Common myeloid progenitor, CD34-positive (primary cell): ENCODE measurements at regions of chr20 and their contacts with region 1.

Region 1: DNA sequence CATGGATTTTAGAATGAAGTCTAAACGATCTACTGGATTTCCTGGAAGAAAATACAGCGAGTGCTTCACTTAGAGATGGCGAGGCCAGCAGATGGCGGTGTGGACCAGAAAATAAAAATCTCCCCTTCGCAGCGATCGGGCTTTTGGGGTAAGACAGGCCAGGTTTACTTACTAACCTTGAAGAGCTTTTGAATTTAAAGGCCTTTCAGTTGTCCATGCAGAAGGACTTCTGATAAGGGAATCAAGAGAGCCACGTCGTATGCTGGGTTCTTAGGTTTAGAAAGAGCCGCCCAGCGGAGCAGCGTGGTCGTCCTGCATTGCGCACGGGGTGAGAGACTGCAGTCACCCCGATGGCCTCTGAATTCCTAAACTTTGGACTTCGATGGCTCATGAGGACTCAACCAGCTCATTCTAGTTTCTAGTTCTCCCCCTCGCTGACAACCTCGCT is 125.2 kb upstream of the RALGAPA2 start:
- DNase-seq: peak; percentile 67 to 81 (median 77)
- H3K4me3 ChIP-seq: peak overlapping the region in 1 of 7 experiments; percentile 36
- H3K27ac ChIP-seq: no peak overlapping the region
- H3K4me1 ChIP-seq: peaks cover 0 to 2% (median 1%) of the 10 kb centered on the region in 4 experiments
- H3K27me3 ChIP-seq: peaks cover 0 to 41% (median 9%) of the 10 kb centered on the region in 5 experiments

Region 2: DNA sequence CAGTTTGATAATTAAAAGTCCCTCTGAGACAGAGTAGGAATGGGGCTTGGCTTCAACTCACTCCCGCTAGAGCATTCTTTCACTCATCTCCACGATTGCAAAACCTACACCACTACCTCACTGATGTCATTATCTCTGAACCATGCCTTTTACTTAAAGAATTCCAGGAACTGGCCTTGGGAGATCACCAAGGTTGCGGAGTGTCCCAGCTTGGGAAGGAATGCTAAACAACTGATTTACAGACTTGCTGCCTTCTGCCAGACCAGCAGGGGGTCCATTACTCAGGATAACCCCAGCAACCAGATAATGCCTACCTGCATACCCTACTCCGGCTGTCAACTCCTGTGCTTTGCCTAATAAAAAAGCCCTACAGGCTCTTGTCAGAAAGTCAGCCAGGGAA is 22.9 kb before region 1 on chr20:
- CTCF ChIA-PET with region 1: no interaction called
- POLR2A ChIA-PET with region 1: no interaction called
- DNase-seq: no peak
- H3K4me3 ChIP-seq: no peak overlapping the region
- H3K27ac ChIP-seq: no peak overlapping the region
- H3K4me1 ChIP-seq: peaks cover 0 to 4% (median 0%) of the 10 kb centered on the region in 4 experiments
- H3K27me3 ChIP-seq: no peaks in the 10 kb centered on the region

Region 3: GRCh38 chr20:20849161-20849560 is 11.6 kb after region 1 on chr20:
- CTCF ChIA-PET with region 1: interaction called, 18 read pairs
- POLR2A ChIA-PET with region 1: no interaction called
- DNase-seq: no peak
- H3K4me3 ChIP-seq: no peak overlapping the region
- H3K27ac ChIP-seq: no peak overlapping the region
- H3K4me1 ChIP-seq: peaks cover 0 to 3% (median 1%) of the 10 kb centered on the region in 4 experiments
- H3K27me3 ChIP-seq: peaks cover 0 to 4% (median 0%) of the 10 kb centered on the region in 5 experiments

Region 4: GRCh38 chr20:20860078-20860806 is 22.6 kb after region 1 on chr20:
- CTCF ChIA-PET with region 1: interaction called, 32 read pairs
- POLR2A ChIA-PET with region 1: no interaction called
- DNase-seq: peak; percentile 84 to 91 (median 89)
- H3K4me3 ChIP-seq: no peak overlapping the region
- H3K27ac ChIP-seq: no peak overlapping the region
- H3K4me1 ChIP-seq: peaks cover 0 to 14% (median 7%) of the 10 kb centered on the region in 4 experiments
- H3K27me3 ChIP-seq: peaks cover 0 to 9% (median 4%) of the 10 kb centered on the region in 5 experiments

Region 5: GRCh38 chr20:21182832-21183563 is 345.4 kb after region 1 on chr20:
- CTCF ChIA-PET with region 1: no interaction called
- POLR2A ChIA-PET with region 1: no interaction called
- DNase-seq: no peak
- H3K4me3 ChIP-seq: no peak overlapping the region
- H3K27ac ChIP-seq: no peak overlapping the region
- H3K4me1 ChIP-seq: no peaks in the 10 kb centered on the region
- H3K27me3 ChIP-seq: no peaks in the 10 kb centered on the region

Region 6: GRCh38 chr20:21505161-21505809 is 667.7 kb after region 1 on chr20:
- CTCF ChIA-PET with region 1: interaction called, 39 read pairs
- POLR2A ChIA-PET with region 1: no interaction called
- DNase-seq: peak; percentile 46 to 72 (median 65)
- H3K4me3 ChIP-seq: peak overlapping the region in 4 of 7 experiments; percentile 37 to 57 (median 46)
- H3K27ac ChIP-seq: no peak overlapping the region
- H3K4me1 ChIP-seq: peaks cover 0 to 22% (median 18%) of the 10 kb centered on the region in 4 experiments
- H3K27me3 ChIP-seq: peaks cover 5 to 98% (median 50%) of the 10 kb centered on the region in 5 experiments